Activated CD8-positive, alpha-beta T cell treated with anti-CD3 and anti-CD28 coated beads for 36 hours (primary cell): ENCODE measurements at regions of chr14 and their contacts with region 1.

Region 1: DNA sequence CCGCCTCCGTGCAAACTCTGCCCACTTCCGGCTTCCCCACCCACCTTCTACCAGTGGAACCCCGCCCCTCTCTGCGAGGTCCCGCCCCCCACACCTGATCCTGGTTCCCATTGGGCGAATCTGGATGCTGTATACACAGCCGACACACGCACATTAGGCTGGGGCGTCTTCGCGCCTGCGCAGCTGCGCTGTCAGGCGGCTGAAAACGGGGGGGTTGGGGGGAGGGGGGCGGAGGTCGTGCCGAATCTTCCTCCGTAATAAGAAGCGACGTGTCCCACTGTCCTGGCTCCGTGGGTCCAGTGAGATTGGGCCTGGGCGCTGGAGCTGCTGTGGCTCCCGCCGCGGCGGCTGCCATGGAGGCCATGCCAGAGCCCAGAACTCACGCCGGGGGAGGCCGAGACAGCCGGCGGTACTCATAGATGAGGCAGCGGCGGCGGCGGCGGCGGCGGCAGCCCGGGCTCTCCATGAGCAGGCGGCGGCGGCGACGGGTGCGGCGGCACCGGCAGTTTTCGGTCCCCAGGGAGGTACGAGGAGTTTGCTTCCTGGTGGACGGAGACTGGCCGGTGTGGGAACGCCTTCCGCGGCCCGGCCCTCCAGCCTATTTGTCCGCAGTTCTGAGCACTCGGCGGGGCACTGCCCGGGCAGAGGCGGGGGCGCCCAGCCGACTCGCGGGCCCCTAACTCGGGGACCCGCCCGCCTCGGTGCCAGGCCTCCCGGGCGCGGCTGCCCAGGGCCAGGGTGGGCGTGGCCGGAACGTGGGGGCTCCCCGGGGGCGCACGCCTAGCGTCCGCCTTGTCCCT is 64.5 kb downstream of the KLHL28 start:
- DNase-seq: peak; percentile 99
- ATAC-seq: peak; percentile 98
- H3K4me3 Mint-ChIP-seq: peak overlapping the region; percentile 82
- H3K27ac Mint-ChIP-seq: peak overlapping the region; percentile 91
- H3K4me1 Mint-ChIP-seq: peaks cover 15% of the 10 kb centered on the region
- H3K27me3 Mint-ChIP-seq: no peaks in the 10 kb centered on the region
- CTCF ChIP-seq: no peak

Region 2: DNA sequence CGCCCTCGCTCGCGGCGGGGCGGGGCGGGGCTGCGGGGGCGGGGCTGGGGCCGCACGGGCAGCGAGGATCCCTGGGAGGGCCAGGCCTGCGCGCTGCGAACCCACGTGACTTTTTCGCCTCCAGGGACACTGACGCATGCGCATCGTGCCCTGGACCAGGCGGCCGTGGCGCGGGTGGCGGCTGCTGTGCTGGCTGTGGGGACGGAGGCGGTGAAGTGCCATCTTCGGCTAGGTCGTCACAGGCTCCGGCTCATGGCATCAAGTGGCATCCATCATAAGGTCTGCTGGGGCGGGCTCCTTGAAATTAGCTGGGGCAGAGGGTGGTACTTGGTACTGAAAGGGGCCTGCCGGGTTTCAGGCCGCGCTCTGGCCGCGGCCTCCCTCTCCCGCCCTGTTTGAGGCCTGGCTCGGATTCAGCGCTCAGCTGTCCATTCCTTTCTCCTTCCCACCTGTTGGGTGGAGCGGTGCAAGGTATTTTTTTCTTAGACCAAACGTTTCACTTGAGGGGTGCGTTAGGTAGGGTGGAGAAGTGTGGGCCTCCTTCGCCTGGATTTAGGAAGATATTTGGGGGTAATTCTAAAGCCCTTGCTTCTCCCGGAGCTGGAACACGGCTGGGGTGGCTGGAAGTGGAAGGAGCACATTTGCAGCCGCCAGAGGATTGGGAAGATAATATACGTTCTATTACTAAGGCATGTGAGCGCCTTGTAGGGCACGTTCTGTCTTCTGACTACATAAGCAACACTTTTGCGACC is 186.9 kb after region 1 on chr14 and contains the start of gene PRPF39:
- CTCF ChIA-PET with region 1: no interaction called
- POLR2A ChIA-PET with region 1: interaction called, 3 read pairs
- intact Hi-C with region 1: loop called (anchors 10 kb)
- DNase-seq: peak; percentile 95
- ATAC-seq: peak; percentile 97
- H3K4me3 Mint-ChIP-seq: peak within 1 kb of the TSS; percentile 93
- H3K27ac Mint-ChIP-seq: peak within 1 kb of the TSS; percentile 94
- H3K4me1 Mint-ChIP-seq: peaks cover 47% of the 10 kb centered on the region
- H3K27me3 Mint-ChIP-seq: no peaks in the 10 kb centered on the region
- CTCF ChIP-seq: no peak
- total RNA-seq, gene PRPF39: 45.7 to 48.3 TPM

Region 3: DNA sequence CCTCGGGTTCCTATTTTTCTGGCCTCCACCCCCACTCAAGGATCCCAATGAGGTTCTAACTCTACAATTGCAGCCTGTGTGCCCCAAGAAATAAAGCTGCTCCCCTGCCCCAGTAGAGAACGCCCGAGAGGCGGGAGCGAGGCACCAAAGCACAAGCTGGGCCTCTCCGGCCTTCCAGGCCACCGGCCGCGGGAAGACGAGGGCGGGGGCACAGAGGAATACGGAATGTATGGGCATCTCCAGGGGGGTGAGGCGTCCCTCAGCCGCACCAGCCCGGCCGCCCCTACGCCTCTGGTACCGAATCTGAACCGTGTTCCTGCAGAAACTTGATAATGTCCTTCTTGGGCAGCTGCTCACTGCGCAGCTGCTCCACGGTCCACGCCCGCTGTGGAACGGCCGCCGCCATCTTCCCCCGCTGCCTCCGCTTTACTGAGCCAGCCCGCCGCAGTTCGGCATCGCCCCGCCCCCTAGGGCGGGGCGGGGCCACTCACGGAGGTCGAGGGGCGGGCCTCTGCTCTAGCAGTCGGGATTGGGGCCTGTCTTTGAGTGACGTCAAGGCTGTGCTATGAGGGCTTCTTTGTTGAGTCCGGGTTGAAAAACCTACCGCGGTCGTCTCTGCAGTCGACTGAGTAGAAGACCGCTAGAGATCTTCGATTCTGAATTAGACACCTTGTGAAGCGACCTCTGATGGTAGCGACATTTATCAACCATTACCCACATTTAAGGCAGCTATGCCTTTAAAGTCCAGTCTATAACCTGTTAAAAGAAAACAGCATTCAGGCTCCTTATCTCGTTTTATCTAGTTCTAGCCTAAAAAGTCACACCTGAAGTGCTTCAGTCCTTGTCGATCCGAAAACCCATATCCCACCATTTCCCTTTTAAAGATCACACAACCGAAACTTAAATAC is 237.1 kb after region 1 on chr14 and contains the start of gene FKBP3:
- CTCF ChIA-PET with region 1: interaction called, 3 read pairs
- POLR2A ChIA-PET with region 1: no interaction called
- intact Hi-C with region 1: loop called (anchors 5 kb)
- DNase-seq: peak; percentile 97
- ATAC-seq: peak; percentile 95
- H3K4me3 Mint-ChIP-seq: peak within 1 kb of the TSS; percentile 99
- H3K27ac Mint-ChIP-seq: peak within 1 kb of the TSS; percentile 98
- H3K4me1 Mint-ChIP-seq: peaks cover 28% of the 10 kb centered on the region
- H3K27me3 Mint-ChIP-seq: no peaks in the 10 kb centered on the region
- CTCF ChIP-seq: no peak
- total RNA-seq, gene FKBP3: 65.6 to 66.4 TPM

Region 4: GRCh38 chr14:45253068-45253753 is 356.0 kb after region 1 on chr14 and contains the start of gene MIS18BP1:
- CTCF ChIA-PET with region 1: no interaction called
- POLR2A ChIA-PET with region 1: no interaction called
- intact Hi-C with region 1: loop called (anchors 10 kb)
- DNase-seq: peak; percentile 97
- ATAC-seq: peak; percentile 93
- H3K4me3 Mint-ChIP-seq: peak within 1 kb of the TSS; percentile 91
- H3K27ac Mint-ChIP-seq: peak within 1 kb of the TSS; percentile 96
- H3K4me1 Mint-ChIP-seq: peaks cover 24% of the 10 kb centered on the region
- H3K27me3 Mint-ChIP-seq: no peaks in the 10 kb centered on the region
- CTCF ChIP-seq: peak; percentile 76
- total RNA-seq, gene MIS18BP1: 51.0 to 55.8 TPM